ENCODE measurements at regions of chr1 and their contacts with region 1.

Region 1: DNA sequence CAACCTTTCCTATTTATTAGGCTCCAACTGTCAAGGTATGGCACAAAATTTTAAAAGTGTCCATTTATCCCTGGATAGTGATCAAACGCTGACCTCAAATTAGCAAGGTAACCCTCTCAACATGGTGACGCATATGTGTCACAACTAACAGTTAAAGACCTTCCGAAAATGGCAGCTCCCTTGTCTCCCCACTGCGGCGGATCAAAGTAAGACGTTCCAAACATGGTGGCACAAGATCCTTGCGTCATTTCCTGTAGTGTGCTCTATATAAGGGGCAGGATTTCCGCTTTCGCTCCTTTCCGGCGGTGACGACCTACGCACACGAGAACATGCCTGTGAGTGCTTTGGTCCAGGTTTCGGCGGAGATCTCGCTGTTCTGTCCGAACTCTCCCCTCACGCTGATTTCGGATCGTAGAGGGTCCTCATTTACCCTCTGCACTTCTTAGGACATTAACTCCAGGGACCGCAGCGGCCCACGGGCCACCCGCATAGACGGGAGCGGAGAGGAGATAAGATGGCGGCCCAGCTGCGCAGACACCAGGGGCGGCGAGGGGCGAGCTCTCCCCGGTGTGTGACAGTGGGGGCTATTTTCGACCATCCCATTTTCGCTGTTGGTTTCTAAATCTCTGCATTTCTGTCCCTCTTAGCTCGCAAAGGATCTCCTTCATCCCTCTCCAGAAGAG is at the start of gene RPS27:
- ATAC-seq: peak; percentile 55 to 86 (median 78)
- H3K4me3 ChIP-seq: peak within 1 kb of the TSS; percentile 72 to 98 (median 95)
- H3K27ac ChIP-seq: peak within 1 kb of the TSS; percentile 90 to 94
- H3K4me1 ChIP-seq: peaks cover 21 to 27% of the 10 kb centered on the region in 2 donors
- total RNA-seq, gene RPS27: 2,543 to 20,464 (median 10,879) TPM

Region 2: GRCh38 chr1:153238536-153238935 is 752.1 kb before region 1 on chr1:
- in situ Hi-C with region 1: no loop called
- ATAC-seq: peak in 3 of 8 experiments; percentile 46 to 64 (median 46)
- H3K4me3 ChIP-seq: no peak overlapping the region
- H3K27ac ChIP-seq: no peak overlapping the region
- H3K4me1 ChIP-seq: no peaks in the 10 kb centered on the region

Region 3: DNA sequence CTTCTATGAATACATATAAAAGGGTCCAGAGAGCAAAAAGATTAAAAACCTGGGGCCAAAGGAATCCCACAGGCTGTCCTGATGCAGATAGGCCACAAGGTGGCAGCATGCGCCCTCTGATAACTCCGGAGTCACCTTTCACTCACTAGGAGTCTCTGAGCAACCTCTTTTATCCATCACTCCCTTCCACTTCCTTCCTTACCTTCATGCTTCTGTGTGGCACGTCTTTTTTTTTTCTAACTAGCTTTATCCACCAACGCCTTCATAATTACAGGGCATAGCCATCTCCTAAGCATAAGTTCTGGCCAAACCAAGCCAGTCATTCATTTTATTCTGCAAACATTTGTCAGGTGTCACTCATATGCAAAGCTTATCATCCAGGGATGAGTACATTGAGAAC is 638.1 kb before region 1 on chr1:
- in situ Hi-C with region 1: loop called in 1 of 9 experiments (anchors 25 kb)
- ATAC-seq: peak; percentile 59 to 91 (median 78)
- H3K4me3 ChIP-seq: no peak overlapping the region
- H3K27ac ChIP-seq: no peak overlapping the region
- H3K4me1 ChIP-seq: no peaks in the 10 kb centered on the region

Region 4: DNA sequence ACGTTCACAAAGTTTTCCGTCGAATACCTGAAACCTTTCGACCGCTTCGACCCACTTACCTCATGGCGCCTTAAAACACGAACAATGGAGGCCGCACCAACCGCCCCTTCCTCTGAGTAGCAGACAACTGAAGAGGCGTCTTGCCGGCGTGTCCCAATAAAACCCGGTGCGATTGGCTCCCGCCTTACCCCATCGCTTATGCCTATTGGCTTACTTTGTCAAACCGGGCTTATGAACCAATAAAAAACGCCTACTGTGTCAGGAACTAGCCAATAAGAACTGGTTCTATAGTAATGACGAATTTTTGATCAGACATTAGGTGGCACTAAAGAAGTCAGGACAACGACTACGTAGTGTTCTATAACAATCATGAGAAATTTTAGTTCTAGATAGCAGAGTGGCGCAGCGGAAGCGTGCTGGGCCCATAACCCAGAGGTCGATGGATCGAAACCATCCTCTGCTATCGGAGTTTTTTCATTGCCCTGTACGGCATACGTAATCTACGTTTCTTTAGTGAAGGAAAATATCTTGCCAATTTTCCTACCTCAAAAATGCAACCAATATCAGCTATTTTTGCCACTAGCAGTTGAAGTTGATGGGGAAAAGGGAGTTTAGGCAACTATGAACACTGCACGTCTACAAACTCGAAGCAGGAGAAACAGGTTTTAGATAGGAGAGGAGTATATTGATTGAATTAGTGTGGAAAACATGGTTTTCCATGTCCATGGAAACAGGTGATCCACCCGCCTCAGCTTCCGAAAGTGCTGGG is 319.6 kb before region 1 on chr1 and contains the start of gene ILF2:
- in situ Hi-C with region 1: loop called in 3 of 9 experiments (anchors 25 kb)
- ATAC-seq: peak; percentile 91 to 95 (median 92)
- H3K4me3 ChIP-seq: peak within 1 kb of the TSS; percentile 65 to 87 (median 76)
- H3K27ac ChIP-seq: peak within 1 kb of the TSS; percentile 89 to 90
- H3K4me1 ChIP-seq: peaks cover 8 to 9% of the 10 kb centered on the region in 2 donors
- total RNA-seq, gene ILF2: 116 to 542 (median 228) TPM

Region 5: GRCh38 chr1:153677718-153678505 is 312.7 kb before region 1 on chr1:
- in situ Hi-C with region 1: loop called in 3 of 9 experiments (anchors 25 kb)
- ATAC-seq: peak; percentile 27 to 72 (median 64)
- H3K4me3 ChIP-seq: peak overlapping the region; percentile 29 to 36 (median 35)
- H3K27ac ChIP-seq: no peak overlapping the region
- H3K4me1 ChIP-seq: peaks cover 6 to 7% of the 10 kb centered on the region in 2 donors